Left cardiac atrium (tissue), 4 donors: ENCODE measurements at regions of chr14 and their contacts with region 1.

Region 1: DNA sequence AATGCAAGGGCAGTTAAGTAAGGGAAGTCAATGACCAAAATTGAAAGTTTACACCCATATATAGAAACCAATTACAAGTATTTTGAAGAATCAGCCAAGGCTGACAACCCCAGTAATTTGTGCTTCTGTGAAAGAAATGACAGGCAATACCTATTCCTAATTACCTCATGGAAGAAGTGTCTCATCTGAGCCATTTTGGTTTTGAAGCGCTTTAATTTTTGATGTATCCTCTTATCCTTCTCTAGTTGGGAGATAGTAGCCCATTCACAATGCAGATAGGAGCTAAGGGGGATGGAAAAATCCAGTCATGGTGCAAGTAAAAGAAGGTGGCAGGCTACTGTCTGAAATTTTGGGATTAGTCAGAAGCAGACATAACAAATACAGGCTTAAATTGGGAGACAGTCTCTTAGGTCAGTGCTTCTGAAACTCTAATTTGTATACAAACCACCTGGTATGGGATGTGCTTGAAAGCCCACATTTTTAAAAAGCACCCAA is 30.4 kb upstream of the SUPT16H start:
- DNase-seq: no peak
- ATAC-seq: no peak

Region 2: GRCh38 chr14:21233457-21234076 is 180.6 kb before region 1 on chr14:
- intact Hi-C with region 1: no loop called
- DNase-seq: no peak
- ATAC-seq: peak; percentile 25 to 51

Region 3: DNA sequence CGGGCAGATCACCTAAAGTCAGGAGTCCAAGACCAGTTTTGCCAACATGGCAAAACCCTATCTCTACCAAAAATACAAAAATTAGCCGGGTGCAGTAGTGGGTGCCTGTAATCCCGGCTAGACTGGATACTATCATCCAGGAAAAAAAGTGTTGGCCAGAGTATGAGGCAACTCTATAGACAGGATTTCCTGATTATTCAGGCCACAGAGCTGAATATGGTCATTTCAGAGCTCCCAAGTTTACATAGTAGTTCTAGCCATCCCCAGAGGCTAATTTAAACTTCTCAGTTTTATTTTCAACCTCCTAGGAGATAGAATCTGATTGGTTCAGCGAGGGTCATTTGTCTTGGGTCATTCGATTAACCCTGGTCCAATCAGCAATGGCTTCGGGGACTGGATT is 127.0 kb before region 1 on chr14:
- intact Hi-C with region 1: no loop called
- DNase-seq: no peak
- ATAC-seq: no peak

Region 4: GRCh38 chr14:21369949-21370679 is 44.1 kb before region 1 on chr14:
- intact Hi-C with region 1: loop called in 1 of 2 experiments (anchors 10 kb)
- DNase-seq: no peak
- ATAC-seq: no peak